CD4-positive, alpha-beta memory T cell (primary cell): ENCODE measurements at regions of chr18 and their contacts with region 1.

Region 1: DNA sequence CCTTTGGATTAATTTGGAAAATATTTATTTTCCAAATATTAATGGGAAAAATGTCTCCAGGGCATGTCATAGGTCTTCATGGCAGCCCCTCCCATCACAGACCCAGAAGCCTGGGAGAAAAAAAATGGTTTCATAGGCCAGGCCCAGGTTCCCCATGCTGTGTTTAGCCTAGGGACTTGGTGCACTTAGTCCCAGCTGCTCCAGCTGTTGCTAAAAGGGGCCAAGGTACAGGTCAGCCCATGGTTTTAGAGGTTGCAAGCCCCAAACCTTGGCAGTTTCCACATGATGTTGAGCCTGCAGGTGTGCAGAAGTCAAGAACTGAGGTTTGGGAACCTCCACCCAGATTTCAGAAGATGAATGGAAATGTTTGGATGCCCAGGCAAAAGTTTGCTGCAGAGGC is 309.6 kb downstream of the SOCS6 start:
- DNase-seq: no peak
- H3K4me3 ChIP-seq: no peak overlapping the region
- H3K4me3 Mint-ChIP-seq: no peak overlapping the region
- H3K27ac ChIP-seq: no peak overlapping the region
- H3K27ac Mint-ChIP-seq: peak overlapping the region in 2 of 7 donors; percentile 64 to 86
- H3K4me1 ChIP-seq: peaks cover 6% of the 10 kb centered on the region
- H3K4me1 Mint-ChIP-seq: peaks cover 7 to 12% (median 8%) of the 10 kb centered on the region in 4 donors
- H3K27me3 ChIP-seq: no peaks in the 10 kb centered on the region
- H3K27me3 Mint-ChIP-seq: no peaks in the 10 kb centered on the region

Region 2: DNA sequence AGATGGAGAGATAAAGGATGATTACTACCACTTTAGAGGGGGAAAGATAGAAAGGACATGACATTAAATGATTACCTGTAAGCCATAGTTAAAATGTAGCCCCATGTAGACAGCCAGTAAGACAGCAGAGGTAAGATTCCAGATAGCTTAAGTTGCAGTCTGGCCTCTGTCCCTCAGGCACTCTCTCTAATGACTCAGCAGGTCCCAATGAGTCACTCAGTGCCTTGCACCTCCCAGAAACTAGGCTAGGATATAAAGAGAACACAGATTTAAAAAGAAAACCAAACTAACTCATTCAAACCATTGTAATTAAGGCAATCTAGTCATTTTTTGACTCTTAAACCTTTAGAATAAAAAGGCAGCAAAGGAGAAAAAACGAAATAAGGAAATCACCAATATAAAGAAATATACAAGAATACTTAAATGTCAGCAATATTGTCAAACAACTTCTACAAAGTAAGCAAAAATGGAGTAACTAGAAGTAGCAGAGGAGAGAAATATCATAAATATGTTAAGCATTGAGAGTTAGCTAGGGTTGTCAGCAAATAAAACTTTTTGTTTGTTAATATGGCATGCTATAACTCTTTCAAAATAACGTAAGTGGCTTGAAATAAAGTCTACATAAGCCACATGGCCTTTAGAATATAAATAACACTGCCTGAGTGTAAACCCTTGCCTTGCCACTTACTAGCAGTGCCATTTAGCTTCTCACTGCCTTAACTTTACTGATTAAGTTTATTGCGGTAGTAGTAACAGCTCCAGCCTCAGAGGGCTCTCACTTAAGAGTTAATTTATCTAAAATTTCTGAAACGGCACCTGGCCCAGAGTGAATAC is 261.1 kb before region 1 on chr18:
- CTCF ChIA-PET with region 1: no interaction called
- POLR2A ChIA-PET with region 1: no interaction called
- intact Hi-C with region 1: no loop called
- DNase-seq: no peak
- H3K4me3 ChIP-seq: no peak overlapping the region
- H3K4me3 Mint-ChIP-seq: no peak overlapping the region
- H3K27ac ChIP-seq: no peak overlapping the region
- H3K27ac Mint-ChIP-seq: no peak overlapping the region
- H3K4me1 ChIP-seq: no peaks in the 10 kb centered on the region
- H3K4me1 Mint-ChIP-seq: no peaks in the 10 kb centered on the region
- H3K27me3 ChIP-seq: no peaks in the 10 kb centered on the region
- H3K27me3 Mint-ChIP-seq: no peaks in the 10 kb centered on the region

Region 3: GRCh38 chr18:70621710-70622109 is 23.3 kb after region 1 on chr18:
- CTCF ChIA-PET with region 1: interaction called, 22 read pairs
- POLR2A ChIA-PET with region 1: interaction called, 19 read pairs
- intact Hi-C with region 1: no loop called
- DNase-seq: peak in 4 of 5 donors; percentile 22 to 33 (median 25)
- H3K4me3 ChIP-seq: peak overlapping the region in 1 of 2 donors; percentile 32
- H3K4me3 Mint-ChIP-seq: peak overlapping the region; percentile 83 to 93 (median 87)
- H3K27ac ChIP-seq: peak overlapping the region; percentile 41
- H3K27ac Mint-ChIP-seq: peak overlapping the region; percentile 86 to 97 (median 96)
- H3K4me1 ChIP-seq: peaks cover 56% of the 10 kb centered on the region
- H3K4me1 Mint-ChIP-seq: peaks cover 24 to 47% (median 35%) of the 10 kb centered on the region in 4 donors
- H3K27me3 ChIP-seq: no peaks in the 10 kb centered on the region
- H3K27me3 Mint-ChIP-seq: peaks cover 0 to 1% of the 10 kb centered on the region in 2 donors

Region 4: GRCh38 chr18:70659036-70659925 is 60.9 kb after region 1 on chr18:
- CTCF ChIA-PET with region 1: interaction called, 10 read pairs
- POLR2A ChIA-PET with region 1: interaction called, 4 read pairs
- intact Hi-C with region 1: loop called (anchors 5 kb)
- DNase-seq: peak; percentile 68 to 80 (median 72)
- H3K4me3 ChIP-seq: no peak overlapping the region
- H3K4me3 Mint-ChIP-seq: peak overlapping the region; percentile 46 to 76 (median 70)
- H3K27ac ChIP-seq: peak overlapping the region; percentile 11
- H3K27ac Mint-ChIP-seq: peak overlapping the region; percentile 81 to 90 (median 87)
- H3K4me1 ChIP-seq: peaks cover 50% of the 10 kb centered on the region
- H3K4me1 Mint-ChIP-seq: peaks cover 23 to 36% (median 27%) of the 10 kb centered on the region in 4 donors
- H3K27me3 ChIP-seq: no peaks in the 10 kb centered on the region
- H3K27me3 Mint-ChIP-seq: no peaks in the 10 kb centered on the region

Region 5: DNA sequence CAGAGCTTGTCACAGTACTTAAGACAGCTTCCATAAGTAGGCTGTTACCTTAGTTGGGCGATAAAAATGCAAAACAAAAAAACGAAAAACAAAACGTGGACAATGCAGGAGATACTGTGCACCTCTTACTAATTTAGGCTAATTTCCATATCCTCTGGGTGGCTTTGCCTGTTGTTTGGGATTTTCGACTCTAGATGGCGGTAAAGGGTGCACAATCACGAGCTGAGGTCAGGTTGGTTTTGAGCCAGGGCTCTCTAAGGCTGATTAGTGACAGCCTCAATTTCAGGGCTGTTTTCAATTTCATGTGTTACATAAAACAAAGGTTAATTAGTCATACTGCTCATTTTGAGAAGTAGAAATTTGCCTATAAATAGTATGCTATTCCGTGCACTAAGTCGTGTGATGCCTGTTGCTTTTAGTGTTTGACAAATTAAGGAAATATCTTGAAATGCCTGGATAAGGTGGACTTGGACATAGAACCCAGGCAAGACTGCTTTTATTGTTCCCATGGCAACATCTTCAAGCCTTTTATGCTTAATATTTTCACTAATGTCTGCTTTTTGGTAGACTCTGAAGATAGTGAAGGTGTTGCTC is 183.6 kb after region 1 on chr18:
- CTCF ChIA-PET with region 1: interaction called, 15 read pairs
- POLR2A ChIA-PET with region 1: no interaction called
- intact Hi-C with region 1: loop called (anchors 1 kb)
- DNase-seq: peak; percentile 53 to 65 (median 59)
- H3K4me3 ChIP-seq: no peak overlapping the region
- H3K4me3 Mint-ChIP-seq: no peak overlapping the region
- H3K27ac ChIP-seq: no peak overlapping the region
- H3K27ac Mint-ChIP-seq: peak overlapping the region in 2 of 7 donors; percentile 70 to 82
- H3K4me1 ChIP-seq: peaks cover 7% of the 10 kb centered on the region
- H3K4me1 Mint-ChIP-seq: peaks cover 0 to 6% (median 3%) of the 10 kb centered on the region in 4 donors
- H3K27me3 ChIP-seq: no peaks in the 10 kb centered on the region
- H3K27me3 Mint-ChIP-seq: no peaks in the 10 kb centered on the region

Region 6: GRCh38 chr18:70892381-70892780 is 294.0 kb after region 1 on chr18:
- CTCF ChIA-PET with region 1: interaction called, 4 read pairs
- POLR2A ChIA-PET with region 1: no interaction called
- intact Hi-C with region 1: loop called (anchors 2 kb)
- DNase-seq: no peak
- H3K4me3 ChIP-seq: no peak overlapping the region
- H3K4me3 Mint-ChIP-seq: no peak overlapping the region
- H3K27ac ChIP-seq: no peak overlapping the region
- H3K27ac Mint-ChIP-seq: no peak overlapping the region
- H3K4me1 ChIP-seq: no peaks in the 10 kb centered on the region
- H3K4me1 Mint-ChIP-seq: no peaks in the 10 kb centered on the region
- H3K27me3 ChIP-seq: no peaks in the 10 kb centered on the region
- H3K27me3 Mint-ChIP-seq: no peaks in the 10 kb centered on the region

Region 7: GRCh38 chr18:70931942-70932814 is 333.8 kb after region 1 on chr18:
- CTCF ChIA-PET with region 1: interaction called, 3 read pairs
- POLR2A ChIA-PET with region 1: no interaction called
- intact Hi-C with region 1: loop called (anchors 1 kb)
- DNase-seq: peak in 2 of 5 donors; percentile 3 to 9
- H3K4me3 ChIP-seq: no peak overlapping the region
- H3K4me3 Mint-ChIP-seq: no peak overlapping the region
- H3K27ac ChIP-seq: no peak overlapping the region
- H3K27ac Mint-ChIP-seq: peak overlapping the region in 1 of 7 donors; percentile 53
- H3K4me1 ChIP-seq: no peaks in the 10 kb centered on the region
- H3K4me1 Mint-ChIP-seq: peaks cover 0 to 2% (median 0%) of the 10 kb centered on the region in 4 donors
- H3K27me3 ChIP-seq: no peaks in the 10 kb centered on the region
- H3K27me3 Mint-ChIP-seq: no peaks in the 10 kb centered on the region

Region 8: DNA sequence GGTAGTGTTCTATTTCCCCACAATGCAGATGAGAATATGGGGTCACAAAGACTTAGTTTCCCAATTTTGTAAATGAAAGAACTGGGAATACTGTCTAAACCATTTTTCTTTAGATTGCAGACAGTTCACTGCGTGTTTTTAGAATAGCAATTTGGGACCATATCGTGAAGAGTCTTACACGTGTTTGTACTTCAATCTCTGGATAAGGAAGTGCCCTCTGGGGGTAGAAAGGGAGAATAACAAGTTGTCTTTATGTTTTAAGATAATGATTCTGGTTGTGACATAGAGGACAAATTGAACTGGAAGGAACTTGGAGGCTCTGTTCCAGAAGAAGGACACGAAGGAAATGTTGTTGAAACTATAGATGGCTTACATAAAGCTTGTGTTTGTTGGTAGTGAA is 1488.0 kb after region 1 on chr18:
- CTCF ChIA-PET with region 1: no interaction called
- POLR2A ChIA-PET with region 1: no interaction called
- intact Hi-C with region 1: loop called (anchors 5 kb)
- DNase-seq: peak in 1 of 5 donors; percentile 1
- H3K4me3 ChIP-seq: no peak overlapping the region
- H3K4me3 Mint-ChIP-seq: no peak overlapping the region
- H3K27ac ChIP-seq: no peak overlapping the region
- H3K27ac Mint-ChIP-seq: no peak overlapping the region
- H3K4me1 ChIP-seq: no peaks in the 10 kb centered on the region
- H3K4me1 Mint-ChIP-seq: peaks cover 0 to 1% (median 0%) of the 10 kb centered on the region in 4 donors
- H3K27me3 ChIP-seq: no peaks in the 10 kb centered on the region
- H3K27me3 Mint-ChIP-seq: no peaks in the 10 kb centered on the region